ENCODE measurements at regions of chr3 and their contacts with region 1.

Region 1: GRCh38 chr3:136350132-136350531 is 100.0 kb downstream of the PCCB start:
- DNase-seq: peak; percentile 86
- H3K4me3 ChIP-seq: no peak overlapping the region; the same call in 1 of the 2 replicates
- CTCF ChIP-seq: no peak

Region 2: DNA sequence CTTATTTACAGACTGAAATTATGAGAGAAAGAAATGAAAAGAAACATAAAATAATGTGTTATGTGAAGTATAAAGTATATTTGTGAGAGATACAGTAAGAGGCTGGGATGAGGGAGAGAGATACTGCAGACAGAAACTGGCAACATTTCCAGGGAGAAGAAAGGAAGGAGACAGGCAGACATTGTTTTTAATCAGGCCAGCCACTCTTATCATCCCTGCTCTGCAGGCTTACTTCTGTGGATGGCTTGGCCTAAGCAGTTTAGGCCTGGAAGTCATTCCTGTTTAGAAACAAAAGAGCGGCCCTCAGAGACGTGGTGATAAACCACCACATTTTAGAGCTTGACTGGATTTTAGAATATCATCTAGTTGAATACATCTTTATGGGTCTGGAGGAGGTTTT is 87.6 kb before region 1 on chr3:
- CTCF ChIA-PET with region 1: no interaction called
- POLR2A ChIA-PET with region 1: no interaction called
- DNase-seq: no peak
- H3K4me3 ChIP-seq: no peak overlapping the region
- CTCF ChIP-seq: no peak

Region 3: DNA sequence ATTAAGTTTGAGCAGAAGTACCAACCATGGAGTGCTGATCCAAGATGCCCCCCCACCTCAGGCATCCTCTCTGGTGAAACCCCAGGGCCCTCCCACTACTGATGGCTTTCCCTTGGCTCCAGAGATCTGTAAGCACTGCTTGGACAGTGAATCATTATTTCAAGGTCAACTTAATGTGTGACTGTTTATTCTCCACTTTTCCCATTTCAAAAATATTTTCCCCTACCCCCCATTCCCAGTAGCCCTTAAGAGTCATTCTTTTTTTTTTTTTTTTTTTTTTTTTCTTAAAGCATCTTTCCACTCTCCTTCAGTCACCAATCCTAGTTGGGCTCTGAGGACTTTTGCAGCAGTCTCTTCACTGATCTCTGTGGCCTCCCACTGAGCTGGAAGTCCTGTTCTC is 17.4 kb before region 1 on chr3:
- CTCF ChIA-PET with region 1: interaction called, 12 read pairs
- POLR2A ChIA-PET with region 1: interaction called, 7 read pairs
- DNase-seq: no peak
- H3K4me3 ChIP-seq: no peak overlapping the region
- CTCF ChIP-seq: no peak

Region 4: DNA sequence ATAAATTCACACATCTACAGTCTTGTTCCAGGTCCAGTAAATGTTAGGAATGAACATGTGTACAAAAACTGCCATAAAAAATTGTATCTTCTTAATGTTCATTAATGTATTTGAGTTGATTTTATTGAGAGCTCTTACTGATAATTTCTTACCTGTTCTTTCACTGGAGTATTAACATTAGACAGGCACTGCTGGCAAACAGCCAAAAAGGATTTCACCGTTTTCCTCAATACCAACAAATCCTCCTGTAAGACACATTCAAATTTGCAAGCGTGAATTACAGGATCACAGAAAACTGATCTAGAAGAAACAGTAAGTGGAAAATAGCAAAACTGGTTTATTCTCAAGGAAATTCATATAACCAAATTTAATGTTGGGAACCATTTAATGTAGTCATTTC is 27.4 kb after region 1 on chr3:
- CTCF ChIA-PET with region 1: no interaction called
- POLR2A ChIA-PET with region 1: no interaction called
- DNase-seq: no peak
- H3K4me3 ChIP-seq: no peak overlapping the region
- CTCF ChIP-seq: no peak

Measured in AG04449 (cell line).